Mucosa of descending colon (tissue), 3 donors: ENCODE measurements at regions of chr5 and their contacts with region 1.

Region 1: DNA sequence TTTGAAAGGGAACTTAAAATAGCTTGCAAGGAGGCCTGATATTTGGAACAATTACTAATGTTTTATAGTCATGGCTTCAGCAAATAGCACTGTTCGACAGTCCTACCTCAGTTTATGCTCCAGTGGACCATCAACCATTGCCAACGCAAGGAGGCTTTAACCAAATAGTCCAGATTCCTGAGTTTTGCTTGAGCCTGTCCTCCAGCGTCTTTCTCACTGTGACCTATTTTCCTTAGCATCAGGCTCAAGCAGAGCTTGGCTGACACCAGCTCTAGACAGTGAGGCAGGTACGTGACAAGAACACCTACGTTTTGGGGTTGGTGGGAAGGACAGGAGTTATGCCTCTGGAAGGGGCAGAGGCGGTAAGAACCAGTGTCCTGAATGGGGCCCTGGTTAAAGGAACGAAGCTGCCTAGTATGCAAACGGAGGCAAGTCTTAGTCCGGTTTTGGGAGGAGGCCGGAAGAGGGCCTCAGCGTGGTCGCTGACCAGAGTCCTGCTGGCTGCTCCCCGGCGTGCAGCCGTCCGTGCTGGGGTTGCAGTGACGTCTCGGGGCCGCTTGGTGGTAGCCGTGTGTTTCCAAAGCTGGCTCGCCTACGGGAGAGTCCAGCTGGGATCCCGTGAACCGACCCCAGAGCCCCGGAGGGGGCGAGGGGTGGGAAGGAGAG is 998 bp upstream of the FGF18 start:
- DNase-seq: peak; percentile 75 to 85 (median 77)
- ATAC-seq: peak; percentile 86
- H3K4me3 ChIP-seq: no peak overlapping the region
- H3K4me1 ChIP-seq: peaks cover 23% of the 10 kb centered on the region
- CTCF ChIP-seq: peak; percentile 89

Region 2: GRCh38 chr5:171874234-171874633 is 455.8 kb after region 1 on chr5:
- intact Hi-C with region 1: no loop called
- DNase-seq: no peak
- ATAC-seq: no peak
- H3K4me3 ChIP-seq: no peak overlapping the region
- H3K4me1 ChIP-seq: no peaks in the 10 kb centered on the region
- CTCF ChIP-seq: no peak

Region 3: DNA sequence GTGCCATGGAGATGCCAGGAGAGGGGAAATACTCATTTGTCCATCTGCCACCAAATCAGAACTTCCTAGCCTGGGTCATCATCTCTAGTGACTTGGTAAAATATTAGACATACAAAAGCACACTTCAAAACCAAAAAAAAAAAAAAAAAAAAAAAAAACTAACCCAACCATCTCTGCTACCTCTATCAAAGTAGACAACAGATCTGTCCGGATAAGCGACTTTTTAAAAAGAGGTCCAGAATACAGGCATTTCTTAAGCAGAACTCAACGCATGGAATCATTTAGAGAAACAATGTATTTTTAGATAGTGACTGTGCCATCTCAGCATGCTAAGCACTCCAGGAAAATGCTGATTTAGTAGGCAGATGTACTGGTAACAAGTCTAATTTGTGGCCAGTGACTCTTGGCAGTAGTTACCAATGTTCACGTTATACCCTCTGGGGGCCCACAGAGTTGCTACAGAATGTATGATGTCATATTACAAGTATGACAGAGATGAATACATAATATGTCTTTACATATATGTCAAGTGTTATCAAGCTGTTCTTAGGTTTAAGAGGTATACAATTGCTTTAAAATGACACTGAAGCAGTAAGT is 474.9 kb after region 1 on chr5:
- intact Hi-C with region 1: loop called in 1 of 2 experiments (anchors 10 kb)
- DNase-seq: no peak
- ATAC-seq: no peak
- H3K4me3 ChIP-seq: no peak overlapping the region
- H3K4me1 ChIP-seq: no peaks in the 10 kb centered on the region
- CTCF ChIP-seq: no peak

Region 4: DNA sequence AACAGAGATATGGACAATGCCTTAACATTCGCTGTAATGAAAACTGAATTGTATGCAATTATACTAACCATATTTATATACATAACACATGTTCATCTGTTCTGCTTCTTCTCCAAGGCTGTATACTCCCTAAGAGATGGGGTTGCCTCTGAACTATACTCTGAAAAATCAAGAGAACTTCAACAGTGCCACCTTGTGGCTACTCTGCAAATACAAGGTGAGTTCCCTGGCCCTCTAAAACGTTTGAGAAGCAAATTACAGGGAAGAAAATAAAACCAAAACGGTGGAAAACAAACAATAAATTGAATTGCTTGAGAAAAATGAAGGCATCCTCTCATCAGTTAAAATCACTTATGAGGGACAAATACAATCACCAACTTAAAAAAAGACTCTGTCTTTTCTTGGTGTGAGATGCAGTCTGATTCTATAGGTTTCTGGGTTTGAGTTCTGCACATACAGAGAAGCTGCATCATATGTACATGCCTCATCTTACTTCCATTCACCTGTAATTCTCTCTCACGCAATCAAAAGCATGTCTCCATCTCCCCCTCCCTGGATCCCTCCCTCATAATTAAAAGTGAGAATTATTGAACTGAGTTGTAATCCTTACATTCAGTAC is 489.4 kb after region 1 on chr5:
- intact Hi-C with region 1: loop called in 1 of 2 experiments (anchors 5 kb)
- DNase-seq: peak in 1 of 3 donors; percentile 74
- ATAC-seq: peak; percentile 81
- H3K4me3 ChIP-seq: no peak overlapping the region
- H3K4me1 ChIP-seq: no peaks in the 10 kb centered on the region
- CTCF ChIP-seq: peak; percentile 66

Region 5: DNA sequence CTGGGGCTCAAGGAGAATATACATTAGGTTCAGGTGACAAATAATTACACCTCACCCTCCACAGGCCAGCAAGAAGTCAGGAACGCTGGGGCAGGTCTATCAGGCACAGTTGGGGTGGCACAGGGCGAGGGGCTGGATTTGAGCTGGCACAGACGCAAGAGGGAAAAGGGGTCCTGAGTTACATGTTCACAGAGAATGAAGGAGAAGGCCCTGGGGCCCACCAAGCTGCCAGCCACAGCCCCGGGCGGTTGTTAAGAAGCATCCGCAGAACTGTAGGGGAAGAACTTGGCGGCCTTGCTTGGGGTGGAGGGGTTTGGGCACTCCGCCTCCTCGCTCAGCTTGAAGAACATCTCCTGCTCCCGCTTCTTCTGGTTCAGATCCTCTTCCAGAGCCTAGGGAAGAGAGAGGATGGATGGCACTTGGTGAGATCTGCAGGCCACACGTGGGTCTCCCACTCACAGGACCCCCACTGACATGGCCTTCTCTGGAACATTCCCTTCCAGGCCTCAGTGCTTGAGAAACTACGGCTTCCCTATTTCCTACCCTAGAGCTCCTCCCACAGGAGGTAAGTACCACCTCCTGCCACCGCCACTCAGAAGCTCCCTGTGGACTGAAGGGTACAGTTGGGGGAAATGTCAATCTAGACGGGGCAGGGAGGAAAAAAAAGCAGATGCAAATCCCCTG is 626.3 kb after region 1 on chr5:
- intact Hi-C with region 1: loop called in 1 of 2 experiments (anchors 10 kb)
- DNase-seq: no peak
- ATAC-seq: no peak
- H3K4me3 ChIP-seq: no peak overlapping the region
- H3K4me1 ChIP-seq: no peaks in the 10 kb centered on the region
- CTCF ChIP-seq: no peak